Activated CD4-positive, alpha-beta T cell treated with anti-CD3 and anti-CD28 coated beads for 36 hours (primary cell): ENCODE measurements at regions of chr19 and their contacts with region 1.

Region 1: GRCh38 chr19:17570791-17571190 is 15.3 kb downstream of the COLGALT1 start:
- DNase-seq: no peak
- ATAC-seq: no peak
- H3K4me3 Mint-ChIP-seq: no peak overlapping the region
- H3K27ac Mint-ChIP-seq: no peak overlapping the region
- H3K4me1 Mint-ChIP-seq: no peaks in the 10 kb centered on the region
- H3K27me3 Mint-ChIP-seq: no peaks in the 10 kb centered on the region

Region 2: DNA sequence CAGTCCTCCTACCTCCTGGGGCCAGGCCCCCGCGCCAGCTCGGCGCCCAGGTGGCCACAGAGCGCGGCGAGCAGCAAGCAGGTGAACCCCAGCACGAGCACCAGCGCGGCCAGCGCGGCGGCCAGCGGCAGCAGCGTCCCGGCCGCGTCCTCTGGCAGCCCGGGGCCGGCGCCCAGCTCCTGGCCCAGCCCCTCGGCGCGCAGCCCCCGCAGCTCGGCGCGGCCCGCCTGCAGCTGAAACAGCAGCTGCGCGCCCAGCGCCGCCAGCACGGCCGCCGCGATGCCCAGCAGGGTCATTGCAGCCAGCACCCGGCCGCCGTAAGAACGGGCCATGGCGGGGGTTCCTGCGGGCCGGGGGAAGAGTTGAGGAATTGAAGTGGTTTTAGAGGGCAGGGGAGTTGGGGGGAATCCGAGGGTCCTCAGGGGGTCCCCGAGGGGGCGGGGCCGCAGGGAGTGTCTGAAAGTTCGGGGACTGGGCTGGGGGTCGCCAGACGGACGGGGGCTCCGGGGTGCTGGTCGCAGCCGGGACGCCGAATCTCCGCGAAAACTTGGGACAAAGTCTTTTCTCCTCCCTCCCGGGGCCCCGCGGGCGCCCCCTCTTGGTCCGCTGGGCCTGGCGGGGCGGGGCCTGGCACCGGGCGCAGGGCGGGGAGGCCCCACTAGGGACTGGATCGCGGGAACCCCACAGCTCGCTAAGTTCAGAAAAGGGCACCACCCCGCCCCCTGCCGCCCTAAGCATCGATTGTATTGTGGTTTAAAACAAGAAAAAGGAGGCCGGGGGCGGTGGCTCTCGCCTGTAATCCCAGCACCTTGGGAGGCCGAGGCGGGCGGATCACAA is 122.4 kb before region 1 on chr19 and contains the start of gene TMEM221:
- CTCF ChIA-PET with region 1: interaction called, 3 read pairs
- POLR2A ChIA-PET with region 1: no interaction called
- intact Hi-C with region 1: loop called (anchors 1 to 5 kb)
- DNase-seq: peak; percentile 77
- ATAC-seq: peak; percentile 57
- H3K4me3 Mint-ChIP-seq: no peak within 1 kb of the TSS
- H3K27ac Mint-ChIP-seq: no peak within 1 kb of the TSS
- H3K4me1 Mint-ChIP-seq: peaks cover 16% of the 10 kb centered on the region
- H3K27me3 Mint-ChIP-seq: peaks cover 14% of the 10 kb centered on the region
- total RNA-seq, gene TMEM221: not detected